ENCODE measurements at regions of chr12 and their contacts with region 1.

Region 1: DNA sequence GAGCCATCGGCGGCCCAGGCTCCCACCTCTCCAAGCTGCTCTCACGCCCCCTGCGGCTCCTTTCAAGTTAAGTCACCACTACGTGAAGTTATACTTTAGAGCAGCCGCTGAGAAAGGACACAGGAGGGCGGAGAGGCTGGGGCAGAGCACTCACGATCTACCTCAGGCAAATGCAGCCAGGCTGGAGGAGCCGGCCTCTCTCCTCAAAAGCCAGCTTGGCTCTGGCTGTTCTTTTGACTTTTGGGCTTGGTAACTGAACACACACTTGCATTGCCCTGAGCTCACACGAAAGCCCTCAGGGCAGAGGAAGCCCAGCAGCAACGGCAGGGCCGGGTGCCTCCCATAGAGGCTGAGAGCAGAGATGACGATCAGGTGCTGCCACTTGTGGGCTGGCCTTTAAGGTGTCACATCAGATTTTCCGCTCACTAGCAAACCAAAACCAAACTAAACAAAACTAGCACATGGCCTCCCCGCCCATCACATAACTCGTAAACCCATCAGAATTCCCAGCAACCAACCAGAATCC is 75.2 kb downstream of the PITPNM2 start:
- DNase-seq: peak; percentile 45 to 88 (median 81)
- ATAC-seq: peak; percentile 91
- H3K4me3 ChIP-seq: peak overlapping the region; percentile 65
- H3K4me3 Mint-ChIP-seq: peak overlapping the region; percentile 88 to 97 (median 92)
- H3K27ac ChIP-seq: peak overlapping the region; percentile 74
- H3K27ac Mint-ChIP-seq: peak overlapping the region; percentile 92 to 99 (median 97)
- H3K4me1 ChIP-seq: peaks cover 23 to 30% of the 10 kb centered on the region in 2 donors
- H3K4me1 Mint-ChIP-seq: peaks cover 45 to 82% (median 71%) of the 10 kb centered on the region in 7 donors
- H3K27me3 ChIP-seq: no peaks in the 10 kb centered on the region
- H3K27me3 Mint-ChIP-seq: no peaks in the 10 kb centered on the region

Region 2: GRCh38 chr12:122013791-122014590 is 1061.7 kb before region 1 on chr12:
- CTCF ChIA-PET with region 1: no interaction called
- POLR2A ChIA-PET with region 1: no interaction called
- intact Hi-C with region 1: no loop called
- DNase-seq: no peak
- ATAC-seq: no peak
- H3K4me3 ChIP-seq: no peak overlapping the region
- H3K4me3 Mint-ChIP-seq: peak overlapping the region in 2 of 10 donors; percentile 4 to 64
- H3K27ac ChIP-seq: no peak overlapping the region
- H3K27ac Mint-ChIP-seq: peak overlapping the region in 1 of 9 donors; percentile 59
- H3K4me1 ChIP-seq: no peaks in the 10 kb centered on the region
- H3K4me1 Mint-ChIP-seq: peaks cover 0 to 4% (median 0%) of the 10 kb centered on the region in 7 donors
- H3K27me3 ChIP-seq: no peaks in the 10 kb centered on the region
- H3K27me3 Mint-ChIP-seq: peaks cover 0 to 11% (median 0%) of the 10 kb centered on the region in 5 donors

Region 3: DNA sequence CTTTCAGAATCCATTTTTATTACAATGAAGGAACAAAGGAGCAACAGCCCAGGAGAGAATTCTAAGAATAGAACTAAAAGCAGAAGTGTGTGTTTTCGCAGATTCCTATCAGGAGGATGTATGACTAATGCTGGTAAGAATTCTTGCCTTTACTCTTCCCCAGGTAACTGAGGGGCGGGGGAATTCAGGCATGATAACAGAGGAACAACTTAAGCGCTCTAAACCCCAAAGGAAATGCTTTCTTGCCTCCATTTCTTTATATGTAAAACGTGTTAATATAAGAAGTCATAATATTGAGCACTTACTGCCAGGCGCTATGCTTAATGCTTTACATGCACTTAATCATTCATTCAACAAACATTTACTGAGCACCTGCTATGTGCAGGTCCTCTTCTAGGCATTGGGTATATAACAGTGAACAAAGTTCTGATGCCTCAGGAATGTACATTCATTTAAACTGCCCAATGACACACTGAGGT is 349.6 kb before region 1 on chr12:
- CTCF ChIA-PET with region 1: no interaction called
- POLR2A ChIA-PET with region 1: no interaction called
- intact Hi-C with region 1: no loop called
- DNase-seq: peak in 1 of 9 donors; percentile 47
- ATAC-seq: peak; percentile 69
- H3K4me3 ChIP-seq: no peak overlapping the region
- H3K4me3 Mint-ChIP-seq: peak overlapping the region in 1 of 10 donors; percentile 57
- H3K27ac ChIP-seq: no peak overlapping the region
- H3K27ac Mint-ChIP-seq: peak overlapping the region in 4 of 9 donors; percentile 17 to 62 (median 38)
- H3K4me1 ChIP-seq: peaks cover 0 to 14% of the 10 kb centered on the region in 2 donors
- H3K4me1 Mint-ChIP-seq: peaks cover 0 to 70% (median 27%) of the 10 kb centered on the region in 7 donors
- H3K27me3 ChIP-seq: no peaks in the 10 kb centered on the region
- H3K27me3 Mint-ChIP-seq: no peaks in the 10 kb centered on the region

Region 4: DNA sequence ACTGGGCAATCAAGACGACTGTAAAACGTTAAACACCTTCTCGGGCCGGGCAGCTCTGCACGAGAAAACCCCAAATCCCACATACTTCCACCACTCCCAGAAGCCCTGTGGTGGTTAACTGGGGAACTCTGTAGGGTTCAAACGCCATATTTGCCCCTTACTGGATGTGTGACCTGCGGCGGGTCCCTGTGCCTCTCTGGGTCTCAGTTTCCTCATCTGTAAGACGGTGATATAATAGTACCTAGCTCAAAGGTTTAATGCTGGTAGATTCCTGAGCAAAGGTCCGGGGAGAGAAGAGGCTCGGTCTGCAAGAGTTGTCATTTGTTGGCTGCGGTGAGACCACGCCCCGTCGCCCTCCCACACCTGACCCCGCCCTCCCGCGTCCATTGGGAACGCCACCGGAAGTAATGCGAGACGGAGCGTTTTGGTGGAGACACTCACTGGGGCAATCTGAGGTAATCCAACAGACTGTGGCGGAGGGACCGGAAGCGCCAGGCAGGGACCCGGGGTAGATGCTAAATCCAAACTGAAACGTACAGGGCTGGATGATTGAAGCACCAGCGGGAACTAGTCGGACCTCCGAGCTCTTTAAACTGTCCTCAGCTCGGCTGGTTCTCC is 101.3 kb before region 1 on chr12:
- CTCF ChIA-PET with region 1: no interaction called
- POLR2A ChIA-PET with region 1: interaction called, 16 read pairs
- intact Hi-C with region 1: loop called (anchors 1 to 2 kb)
- DNase-seq: peak; percentile 92 to 98 (median 98)
- ATAC-seq: peak; percentile 92
- H3K4me3 ChIP-seq: peak overlapping the region; percentile 100
- H3K4me3 Mint-ChIP-seq: peak overlapping the region; percentile 92 to 99 (median 97)
- H3K27ac ChIP-seq: peak overlapping the region; percentile 98
- H3K27ac Mint-ChIP-seq: peak overlapping the region; percentile 99 to 100 (median 99)
- H3K4me1 ChIP-seq: peaks cover 18 to 23% of the 10 kb centered on the region in 2 donors
- H3K4me1 Mint-ChIP-seq: peaks cover 17 to 39% (median 30%) of the 10 kb centered on the region in 7 donors
- H3K27me3 ChIP-seq: no peaks in the 10 kb centered on the region
- H3K27me3 Mint-ChIP-seq: peaks cover 0 to 3% (median 0%) of the 10 kb centered on the region in 5 donors

Region 5: GRCh38 chr12:123043536-123044001 is 32.1 kb before region 1 on chr12:
- CTCF ChIA-PET with region 1: interaction called, 35 read pairs
- POLR2A ChIA-PET with region 1: interaction called, 19 read pairs
- intact Hi-C with region 1: loop called (anchors 1 kb)
- DNase-seq: peak; percentile 36 to 83 (median 71)
- ATAC-seq: peak; percentile 92
- H3K4me3 ChIP-seq: no peak overlapping the region
- H3K4me3 Mint-ChIP-seq: peak overlapping the region in 9 of 10 donors; percentile 13 to 69 (median 56)
- H3K27ac ChIP-seq: peak overlapping the region; percentile 38
- H3K27ac Mint-ChIP-seq: peak overlapping the region; percentile 40 to 95 (median 84)
- H3K4me1 ChIP-seq: peaks cover 10 to 17% of the 10 kb centered on the region in 2 donors
- H3K4me1 Mint-ChIP-seq: peaks cover 27 to 65% (median 52%) of the 10 kb centered on the region in 7 donors
- H3K27me3 ChIP-seq: no peaks in the 10 kb centered on the region
- H3K27me3 Mint-ChIP-seq: no peaks in the 10 kb centered on the region

Region 6: GRCh38 chr12:123085730-123086487 is 10.2 kb after region 1 on chr12:
- CTCF ChIA-PET with region 1: interaction called, 8 read pairs
- POLR2A ChIA-PET with region 1: interaction called, 6 read pairs
- intact Hi-C with region 1: loop called in 1 of 2 experiments (anchors 1 kb)
- DNase-seq: no peak
- ATAC-seq: peak; percentile 46
- H3K4me3 ChIP-seq: no peak overlapping the region
- H3K4me3 Mint-ChIP-seq: no peak overlapping the region
- H3K27ac ChIP-seq: no peak overlapping the region
- H3K27ac Mint-ChIP-seq: peak overlapping the region in 4 of 9 donors; percentile 3 to 78 (median 46)
- H3K4me1 ChIP-seq: no peaks in the 10 kb centered on the region
- H3K4me1 Mint-ChIP-seq: peaks cover 10 to 52% (median 45%) of the 10 kb centered on the region in 7 donors
- H3K27me3 ChIP-seq: no peaks in the 10 kb centered on the region
- H3K27me3 Mint-ChIP-seq: no peaks in the 10 kb centered on the region

Region 7: GRCh38 chr12:123115409-123116121 is 39.9 kb after region 1 on chr12:
- CTCF ChIA-PET with region 1: interaction called, 15 read pairs
- POLR2A ChIA-PET with region 1: interaction called, 79 read pairs
- intact Hi-C with region 1: loop called (anchors 1 kb)
- DNase-seq: peak in 7 of 9 donors; percentile 54 to 79 (median 70)
- ATAC-seq: peak; percentile 78
- H3K4me3 ChIP-seq: no peak overlapping the region
- H3K4me3 Mint-ChIP-seq: peak overlapping the region; percentile 38 to 81 (median 74)
- H3K27ac ChIP-seq: peak overlapping the region; percentile 69
- H3K27ac Mint-ChIP-seq: peak overlapping the region; percentile 41 to 100 (median 95)
- H3K4me1 ChIP-seq: peaks cover 3 to 59% of the 10 kb centered on the region in 2 donors
- H3K4me1 Mint-ChIP-seq: peaks cover 40 to 92% (median 85%) of the 10 kb centered on the region in 7 donors
- H3K27me3 ChIP-seq: no peaks in the 10 kb centered on the region
- H3K27me3 Mint-ChIP-seq: no peaks in the 10 kb centered on the region

Region 8: DNA sequence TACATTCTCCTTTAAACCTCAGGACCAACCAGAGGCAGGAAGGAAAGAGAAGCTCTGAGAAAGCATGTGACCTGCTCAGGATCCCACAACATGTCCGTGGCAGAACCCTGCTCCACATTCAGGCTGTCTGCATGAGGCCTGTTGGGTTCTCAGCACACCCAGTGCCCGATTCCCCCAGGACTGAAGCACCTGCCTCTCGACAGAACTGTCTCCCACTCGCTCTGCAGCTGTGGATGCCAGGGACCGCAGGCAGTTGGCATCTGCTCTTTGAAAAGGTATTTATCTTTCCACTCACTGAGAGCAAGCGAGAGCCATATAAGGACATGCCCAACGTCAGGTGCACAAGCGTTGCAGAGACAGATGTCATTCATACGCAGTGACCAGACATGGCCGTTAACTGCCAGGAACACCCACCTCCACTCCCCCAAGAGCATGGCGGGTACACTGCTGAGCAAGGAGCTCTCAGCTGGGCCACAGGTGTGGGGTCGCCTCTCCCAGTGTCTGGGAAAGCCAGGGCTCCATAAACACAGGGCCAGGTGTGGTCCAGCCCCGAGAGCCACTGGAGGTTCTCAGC is 56.3 kb after region 1 on chr12:
- CTCF ChIA-PET with region 1: interaction called, 6 read pairs
- POLR2A ChIA-PET with region 1: interaction called, 11 read pairs
- intact Hi-C with region 1: loop called in 1 of 2 experiments (anchors 1 kb)
- DNase-seq: peak in 8 of 9 donors; percentile 34 to 83 (median 71)
- ATAC-seq: peak; percentile 96
- H3K4me3 ChIP-seq: peak overlapping the region; percentile 24
- H3K4me3 Mint-ChIP-seq: peak overlapping the region; percentile 75 to 83 (median 79)
- H3K27ac ChIP-seq: peak overlapping the region; percentile 84
- H3K27ac Mint-ChIP-seq: peak overlapping the region; percentile 89 to 98 (median 95)
- H3K4me1 ChIP-seq: peaks cover 0 to 27% of the 10 kb centered on the region in 2 donors
- H3K4me1 Mint-ChIP-seq: peaks cover 24 to 70% (median 55%) of the 10 kb centered on the region in 7 donors
- H3K27me3 ChIP-seq: no peaks in the 10 kb centered on the region
- H3K27me3 Mint-ChIP-seq: no peaks in the 10 kb centered on the region

Region 9: GRCh38 chr12:124814741-124815613 is 1739.3 kb after region 1 on chr12:
- CTCF ChIA-PET with region 1: no interaction called
- POLR2A ChIA-PET with region 1: no interaction called
- intact Hi-C with region 1: no loop called
- DNase-seq: no peak
- ATAC-seq: peak; percentile 50
- H3K4me3 ChIP-seq: no peak overlapping the region
- H3K4me3 Mint-ChIP-seq: no peak overlapping the region
- H3K27ac ChIP-seq: no peak overlapping the region
- H3K27ac Mint-ChIP-seq: peak overlapping the region in 1 of 9 donors; percentile 67
- H3K4me1 ChIP-seq: no peaks in the 10 kb centered on the region
- H3K4me1 Mint-ChIP-seq: peaks cover 0 to 5% (median 0%) of the 10 kb centered on the region in 7 donors
- H3K27me3 ChIP-seq: no peaks in the 10 kb centered on the region
- H3K27me3 Mint-ChIP-seq: no peaks in the 10 kb centered on the region